ENCODE measurements at regions of chr14 and their contacts with region 1.

Region 1: GRCh38 chr14:34059855-34060638 is 109.2 kb upstream of the EGLN3 start:
- DNase-seq: peak; percentile 91

Region 2: DNA sequence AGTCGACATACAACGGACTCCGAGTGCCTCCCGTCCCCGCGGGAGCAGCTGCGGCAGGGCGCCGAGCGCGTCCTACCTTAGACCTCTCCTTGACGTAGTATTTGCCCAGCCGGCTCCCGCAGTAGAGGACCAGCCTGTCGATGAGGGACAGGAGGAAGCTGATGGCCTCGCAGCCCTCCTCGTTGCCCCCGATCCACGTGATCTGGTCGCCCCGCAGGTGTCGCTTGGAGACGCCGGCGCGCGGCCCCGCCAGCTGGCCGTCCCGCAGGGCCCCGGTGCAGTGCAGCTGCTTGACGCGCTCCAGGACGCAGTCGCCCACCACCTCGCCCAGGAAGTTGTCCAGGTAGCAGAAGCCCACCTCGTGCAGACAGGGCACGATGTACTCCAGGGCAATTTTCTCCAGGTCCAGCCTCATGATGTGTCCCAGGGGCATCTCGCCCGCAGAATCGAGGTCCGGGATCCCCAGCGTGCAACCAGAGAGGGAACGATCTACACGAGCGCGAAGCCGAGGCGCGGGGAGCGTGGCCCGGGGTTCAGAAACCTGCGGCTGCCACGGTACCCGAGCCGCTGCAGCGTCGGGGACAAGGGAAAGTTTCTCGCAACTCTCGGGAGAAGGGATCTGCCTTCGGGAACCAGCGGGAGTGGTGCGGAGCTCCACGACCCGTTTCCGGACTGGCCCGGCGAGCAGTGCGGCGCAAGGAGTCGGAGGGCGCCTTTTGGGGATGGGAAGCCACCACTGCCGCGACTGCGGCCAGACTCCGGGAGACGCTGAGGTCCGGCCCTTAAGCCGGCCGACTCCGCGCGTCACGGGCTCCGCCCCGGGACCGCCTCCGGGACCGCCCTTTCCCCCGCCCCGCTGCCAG is 109.5 kb before region 1 on chr14 and contains the start of gene EGLN3:
- intact Hi-C with region 1: loop called (anchors 5 kb)
- DNase-seq: peak; percentile 95
- total RNA-seq, gene EGLN3: 326 TPM

Region 3: DNA sequence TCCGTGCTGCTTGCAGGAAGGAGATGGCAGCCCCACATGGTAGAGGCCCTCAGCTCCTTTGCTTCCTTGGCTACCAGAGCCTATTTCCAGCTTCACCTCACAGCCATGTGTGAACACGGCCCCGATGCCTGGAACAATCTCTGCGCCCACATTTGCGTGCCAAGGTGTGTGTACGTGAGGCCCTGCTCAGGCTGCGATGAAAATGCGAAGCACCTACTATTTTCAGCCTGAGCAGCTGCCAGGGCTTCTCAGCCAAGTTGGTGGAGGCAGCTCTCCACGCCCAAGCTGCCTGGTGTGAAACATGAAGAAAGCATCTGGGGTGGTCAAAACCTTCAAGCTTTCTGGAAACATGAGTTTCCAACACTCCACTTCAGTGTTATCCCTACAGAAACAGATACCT is 68.6 kb after region 1 on chr14:
- intact Hi-C with region 1: loop called (anchors 1 kb)
- DNase-seq: no peak

Region 4: DNA sequence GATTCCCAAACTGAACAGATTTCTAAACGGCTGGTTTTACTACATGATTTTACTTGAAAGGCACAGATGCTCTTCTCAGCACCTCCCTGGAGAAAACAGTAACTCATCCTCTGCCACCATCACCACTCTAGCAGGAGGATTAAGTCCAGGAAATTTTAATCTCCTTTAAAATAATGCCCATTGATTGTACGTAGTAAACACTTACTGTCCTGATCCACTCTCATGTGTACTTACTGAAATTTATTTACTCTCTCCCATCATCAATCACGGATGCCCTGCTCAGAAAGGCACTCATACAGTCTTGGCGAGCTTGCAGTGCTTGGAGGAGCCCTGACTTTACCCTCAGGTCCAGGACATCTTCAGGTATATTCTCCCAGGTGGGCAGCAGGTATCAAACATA is 130.7 kb after region 1 on chr14:
- intact Hi-C with region 1: no loop called
- DNase-seq: no peak

Measured in cardiac septum (tissue), 1 donor.